CD4-positive, alpha-beta T cell (primary cell): ENCODE measurements at regions of chr6 and their contacts with region 1.

Region 1: DNA sequence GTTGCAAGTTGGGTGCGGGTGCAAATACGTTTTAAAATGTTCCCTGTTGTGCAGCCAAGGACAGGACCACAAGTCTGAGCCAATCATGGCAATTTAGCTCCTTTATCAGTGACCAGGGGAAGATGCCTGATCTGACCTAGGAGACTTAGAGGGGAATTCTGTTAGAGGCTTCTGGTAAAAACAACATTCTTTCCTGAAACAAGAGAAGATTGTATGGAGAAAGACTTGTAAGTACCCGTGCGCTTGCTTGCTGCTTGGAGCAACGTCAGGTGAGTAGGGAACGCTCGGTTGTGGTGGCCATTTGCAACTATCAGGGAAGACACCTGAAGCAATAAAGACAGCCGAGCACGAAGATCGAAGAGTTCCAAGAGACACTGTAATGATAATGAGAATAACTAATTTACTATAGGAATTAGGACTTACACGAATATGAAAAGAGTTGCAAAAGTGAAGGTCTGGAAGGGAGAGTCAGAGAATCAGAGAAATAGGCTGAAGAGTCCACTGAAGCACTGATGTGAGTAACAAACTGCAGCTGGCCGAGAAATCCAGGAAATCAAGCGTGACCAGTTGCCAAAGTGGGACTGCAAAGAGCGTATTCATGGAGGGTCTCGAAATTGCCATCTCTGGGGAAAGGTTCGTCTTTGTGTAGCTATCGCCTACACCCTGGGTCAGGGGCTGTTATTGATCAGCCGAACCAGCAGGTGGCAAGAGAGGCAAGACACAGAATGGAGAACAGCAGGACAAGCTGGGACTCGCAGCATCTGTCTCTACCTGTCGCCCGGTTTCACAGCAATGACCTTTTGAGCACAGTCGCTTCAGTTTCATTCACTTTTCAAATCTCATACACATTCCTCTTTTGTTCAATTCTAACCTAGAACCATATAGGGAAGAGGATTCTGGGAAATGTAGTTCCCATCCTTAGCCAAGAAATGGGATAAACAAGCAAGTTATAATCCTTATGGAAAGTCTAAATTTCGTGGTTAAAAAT is 26.1 kb downstream of the LOC128125822 start:
- DNase-seq: peak; percentile 58 to 88 (median 67)
- ATAC-seq: peak; percentile 99
- H3K4me3 ChIP-seq: peak overlapping the region; percentile 53
- H3K4me3 Mint-ChIP-seq: peak overlapping the region; percentile 87
- H3K27ac ChIP-seq: no peak overlapping the region
- H3K27ac Mint-ChIP-seq: no peak overlapping the region
- H3K4me1 ChIP-seq: peaks cover 11% of the 10 kb centered on the region
- H3K4me1 Mint-ChIP-seq: peaks cover 15% of the 10 kb centered on the region
- H3K27me3 ChIP-seq: no peaks in the 10 kb centered on the region
- H3K27me3 Mint-ChIP-seq: peaks cover 18% of the 10 kb centered on the region
- CTCF ChIP-seq: peak; percentile 92

Region 2: GRCh38 chr6:63278916-63279315 is 319.4 kb before region 1 on chr6:
- CTCF ChIA-PET with region 1: no interaction called
- POLR2A ChIA-PET with region 1: no interaction called
- intact Hi-C with region 1: no loop called
- DNase-seq: no peak
- ATAC-seq: no peak
- H3K4me3 ChIP-seq: no peak overlapping the region
- H3K4me3 Mint-ChIP-seq: no peak overlapping the region
- H3K27ac ChIP-seq: no peak overlapping the region
- H3K27ac Mint-ChIP-seq: no peak overlapping the region
- H3K4me1 ChIP-seq: no peaks in the 10 kb centered on the region
- H3K4me1 Mint-ChIP-seq: no peaks in the 10 kb centered on the region
- H3K27me3 ChIP-seq: no peaks in the 10 kb centered on the region
- H3K27me3 Mint-ChIP-seq: no peaks in the 10 kb centered on the region
- CTCF ChIP-seq: no peak

Region 3: GRCh38 chr6:63571881-63572732 is 26.2 kb before region 1 on chr6 and contains the starts of genes LOC128125822 and PTP4A1:
- CTCF ChIA-PET with region 1: interaction called, 13 read pairs
- POLR2A ChIA-PET with region 1: interaction called, 8 read pairs
- intact Hi-C with region 1: loop called in 1 of 2 experiments (anchors 2 kb)
- DNase-seq: peak; percentile 93 to 99 (median 96)
- ATAC-seq: peak; percentile 81
- H3K4me3 ChIP-seq: peak within 1 kb of the TSS; percentile 76
- H3K4me3 Mint-ChIP-seq: peak within 1 kb of the TSS; percentile 96
- H3K27ac ChIP-seq: peak within 1 kb of the TSS; percentile 96 to 97
- H3K27ac Mint-ChIP-seq: peak within 1 kb of the TSS; percentile 91
- H3K4me1 ChIP-seq: peaks cover 18% of the 10 kb centered on the region
- H3K4me1 Mint-ChIP-seq: peaks cover 45% of the 10 kb centered on the region
- H3K27me3 ChIP-seq: no peaks in the 10 kb centered on the region
- H3K27me3 Mint-ChIP-seq: no peaks in the 10 kb centered on the region
- CTCF ChIP-seq: no peak
- total RNA-seq, gene PTP4A1: 254 to 258 TPM

Region 4: DNA sequence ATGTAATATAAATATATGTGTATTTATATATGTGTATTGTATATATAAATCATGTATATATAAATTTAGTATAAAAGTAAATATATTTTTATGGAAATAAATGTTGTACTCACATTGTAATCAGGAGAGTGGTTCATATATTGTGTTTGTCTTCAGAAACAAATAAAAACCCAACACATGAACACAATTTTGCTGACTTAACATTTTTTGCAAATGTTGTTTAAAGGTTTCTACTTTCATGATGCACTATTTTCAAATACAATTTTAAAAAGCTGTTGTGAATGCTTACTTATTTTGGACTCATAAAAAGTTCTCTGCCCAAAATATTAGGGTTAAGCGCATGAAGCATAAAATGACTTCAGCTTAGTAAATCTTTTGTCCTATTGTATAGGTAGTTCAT is 13.2 kb after region 1 on chr6:
- CTCF ChIA-PET with region 1: interaction called, 14 read pairs
- POLR2A ChIA-PET with region 1: no interaction called
- intact Hi-C with region 1: no loop called
- DNase-seq: no peak
- ATAC-seq: no peak
- H3K4me3 ChIP-seq: no peak overlapping the region
- H3K4me3 Mint-ChIP-seq: no peak overlapping the region
- H3K27ac ChIP-seq: no peak overlapping the region
- H3K27ac Mint-ChIP-seq: no peak overlapping the region
- H3K4me1 ChIP-seq: no peaks in the 10 kb centered on the region
- H3K4me1 Mint-ChIP-seq: no peaks in the 10 kb centered on the region
- H3K27me3 ChIP-seq: no peaks in the 10 kb centered on the region
- H3K27me3 Mint-ChIP-seq: peaks cover 9% of the 10 kb centered on the region
- CTCF ChIP-seq: no peak

Region 5: DNA sequence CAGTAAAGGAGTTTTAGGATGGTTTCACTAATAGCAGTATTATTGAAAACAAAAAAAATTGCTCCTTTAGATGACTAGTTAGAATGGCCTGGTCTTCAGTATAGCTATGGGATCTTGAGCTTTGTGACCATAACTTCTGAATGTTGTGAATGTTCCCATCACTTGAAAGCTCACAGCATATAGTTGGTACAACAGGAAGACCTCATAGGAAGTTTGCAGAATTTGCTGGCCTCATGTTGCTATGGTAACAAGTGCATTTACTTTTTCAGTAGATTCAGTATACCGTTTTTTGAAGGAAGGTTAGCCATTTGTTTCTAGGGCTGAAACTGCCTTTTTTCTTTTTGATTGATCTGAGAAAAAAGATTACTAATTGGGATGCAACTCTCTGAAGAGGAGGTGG is 45.5 kb after region 1 on chr6:
- CTCF ChIA-PET with region 1: interaction called, 12 read pairs
- POLR2A ChIA-PET with region 1: no interaction called
- intact Hi-C with region 1: loop called in 1 of 2 experiments (anchors 5 kb)
- DNase-seq: peak in 5 of 14 experiments; percentile 16 to 76 (median 71)
- ATAC-seq: peak; percentile 70
- H3K4me3 ChIP-seq: no peak overlapping the region
- H3K4me3 Mint-ChIP-seq: peak overlapping the region; percentile 27
- H3K27ac ChIP-seq: no peak overlapping the region
- H3K27ac Mint-ChIP-seq: peak overlapping the region; percentile 21
- H3K4me1 ChIP-seq: peaks cover 13% of the 10 kb centered on the region
- H3K4me1 Mint-ChIP-seq: peaks cover 95% of the 10 kb centered on the region
- H3K27me3 ChIP-seq: no peaks in the 10 kb centered on the region
- H3K27me3 Mint-ChIP-seq: no peaks in the 10 kb centered on the region
- CTCF ChIP-seq: no peak

Region 6: DNA sequence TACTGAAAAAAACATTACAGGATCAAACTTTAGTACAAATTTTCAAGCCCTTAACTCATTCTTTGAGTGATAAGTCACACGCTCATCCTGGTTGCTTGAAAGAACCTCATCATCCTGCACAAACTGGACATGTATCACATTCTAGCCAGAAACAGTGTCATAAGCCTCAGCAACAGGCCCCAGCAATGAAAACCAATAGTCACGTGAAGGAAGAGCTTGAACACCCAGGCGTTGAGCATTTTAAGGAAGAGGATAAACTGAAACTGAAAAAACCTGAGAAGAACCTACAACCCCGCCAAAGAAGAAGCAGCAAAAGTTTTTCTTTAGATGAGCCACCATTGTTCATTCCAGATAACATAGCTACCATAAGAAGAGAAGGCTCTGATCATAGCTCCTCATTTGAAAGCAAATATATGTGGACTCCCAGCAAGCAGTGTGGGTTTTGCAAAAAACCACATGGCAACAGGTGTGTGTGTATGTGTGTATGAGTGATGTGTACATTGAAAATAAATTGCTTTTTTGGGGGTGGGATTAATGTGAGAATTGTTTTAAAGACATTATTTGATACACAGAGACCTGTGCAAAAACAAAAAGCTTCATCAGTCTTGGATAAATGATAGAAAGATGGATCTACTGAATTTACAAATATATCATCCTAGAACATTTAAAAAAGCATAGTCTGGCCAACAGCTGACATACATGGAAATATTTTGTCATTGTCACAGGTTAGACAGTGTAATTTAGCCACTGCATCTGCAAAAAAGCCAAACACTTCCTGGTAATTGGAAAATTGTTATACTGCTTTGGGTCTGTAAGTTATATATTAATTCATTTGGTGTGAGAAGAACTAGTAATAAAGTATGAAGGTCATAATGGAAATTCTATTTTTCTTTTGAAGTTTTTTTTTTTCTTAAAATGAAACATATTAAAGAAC is 87.4 kb after region 1 on chr6:
- CTCF ChIA-PET with region 1: interaction called, 11 read pairs
- POLR2A ChIA-PET with region 1: no interaction called
- intact Hi-C with region 1: loop called in 1 of 2 experiments (anchors 5 kb)
- DNase-seq: peak in 2 of 14 experiments; percentile 20 to 34
- ATAC-seq: no peak
- H3K4me3 ChIP-seq: no peak overlapping the region
- H3K4me3 Mint-ChIP-seq: no peak overlapping the region
- H3K27ac ChIP-seq: no peak overlapping the region
- H3K27ac Mint-ChIP-seq: no peak overlapping the region
- H3K4me1 ChIP-seq: no peaks in the 10 kb centered on the region
- H3K4me1 Mint-ChIP-seq: peaks cover 56% of the 10 kb centered on the region
- H3K27me3 ChIP-seq: no peaks in the 10 kb centered on the region
- H3K27me3 Mint-ChIP-seq: no peaks in the 10 kb centered on the region
- CTCF ChIP-seq: no peak

Region 7: DNA sequence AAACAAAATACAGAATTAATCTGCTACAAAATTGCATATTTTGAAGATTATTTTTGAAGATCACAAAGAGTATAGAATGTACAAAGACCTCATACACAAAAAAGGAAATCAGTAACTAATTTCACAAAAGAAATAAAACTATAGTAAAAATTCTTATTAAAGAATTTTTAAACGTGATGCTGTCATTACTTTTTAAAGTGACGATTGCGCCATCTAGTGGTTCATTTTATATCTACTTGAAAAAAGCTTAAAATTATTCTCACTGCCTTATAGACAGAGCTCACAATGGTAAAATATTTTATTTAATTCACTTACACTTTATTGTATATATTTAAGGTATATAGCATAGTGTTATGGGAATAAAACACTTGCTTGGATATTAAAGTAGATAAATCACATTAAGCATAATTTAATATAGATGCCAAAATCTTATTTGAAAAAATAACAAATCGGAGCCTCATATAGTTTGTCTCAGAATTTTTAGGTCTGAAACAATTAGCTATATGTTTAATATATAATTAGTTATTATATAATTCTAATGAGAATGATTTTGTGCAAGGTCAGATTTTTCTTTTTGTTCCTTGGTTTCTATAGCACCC is 166.1 kb after region 1 on chr6:
- CTCF ChIA-PET with region 1: interaction called, 31 read pairs
- POLR2A ChIA-PET with region 1: interaction called, 17 read pairs
- intact Hi-C with region 1: loop called (anchors 1 kb)
- DNase-seq: peak in 3 of 14 experiments; percentile 65 to 76 (median 70)
- ATAC-seq: no peak
- H3K4me3 ChIP-seq: no peak overlapping the region
- H3K4me3 Mint-ChIP-seq: no peak overlapping the region
- H3K27ac ChIP-seq: no peak overlapping the region
- H3K27ac Mint-ChIP-seq: no peak overlapping the region
- H3K4me1 ChIP-seq: no peaks in the 10 kb centered on the region
- H3K4me1 Mint-ChIP-seq: no peaks in the 10 kb centered on the region
- H3K27me3 ChIP-seq: no peaks in the 10 kb centered on the region
- H3K27me3 Mint-ChIP-seq: peaks cover 8% of the 10 kb centered on the region
- CTCF ChIP-seq: peak; percentile 77